ENCODE measurements at regions of chr13 and their contacts with region 1.

Region 1: DNA sequence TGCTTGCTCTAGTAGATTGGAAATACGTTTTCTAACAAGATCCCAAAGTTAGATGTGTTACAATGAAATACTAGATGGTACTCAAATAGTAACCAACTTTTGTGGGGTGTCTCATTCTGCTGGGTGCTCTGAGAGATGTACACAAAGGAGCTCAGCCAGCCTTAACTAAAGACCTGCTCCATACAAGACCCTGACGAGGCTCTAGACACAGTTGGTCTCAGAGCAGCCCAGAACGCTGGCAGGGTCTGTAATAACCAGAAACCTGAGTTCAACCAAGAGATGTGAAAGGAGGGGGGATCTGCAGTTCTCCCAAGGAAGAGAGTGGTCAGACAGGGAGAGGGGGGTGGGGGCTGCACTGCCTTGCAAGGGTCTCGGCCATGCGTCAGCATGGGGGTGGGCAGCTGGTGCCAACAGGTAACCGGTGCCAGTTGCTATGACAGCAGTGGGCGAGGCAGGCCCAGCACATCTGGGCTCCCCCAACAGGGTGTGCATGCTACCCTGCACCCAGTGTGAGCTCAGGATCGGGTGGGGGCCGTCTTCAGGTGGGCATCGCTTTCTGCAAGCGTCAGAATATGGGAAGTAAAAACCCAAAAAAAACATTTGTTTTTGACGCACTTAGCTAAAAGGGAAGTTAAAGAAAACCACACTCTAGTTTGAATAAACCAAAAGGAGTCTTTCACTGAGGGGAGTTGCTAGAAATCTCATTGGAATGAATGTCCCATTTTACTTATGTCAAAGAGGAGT is 68.0 kb upstream of the GPR183 start:
- DNase-seq: peak; percentile 78
- ATAC-seq: peak; percentile 80
- H3K4me3 Mint-ChIP-seq: peak overlapping the region; percentile 72
- H3K27ac Mint-ChIP-seq: peak overlapping the region; percentile 98
- H3K4me1 Mint-ChIP-seq: peaks cover 92% of the 10 kb centered on the region
- H3K27me3 Mint-ChIP-seq: no peaks in the 10 kb centered on the region
- CTCF ChIP-seq: no peak

Region 2: DNA sequence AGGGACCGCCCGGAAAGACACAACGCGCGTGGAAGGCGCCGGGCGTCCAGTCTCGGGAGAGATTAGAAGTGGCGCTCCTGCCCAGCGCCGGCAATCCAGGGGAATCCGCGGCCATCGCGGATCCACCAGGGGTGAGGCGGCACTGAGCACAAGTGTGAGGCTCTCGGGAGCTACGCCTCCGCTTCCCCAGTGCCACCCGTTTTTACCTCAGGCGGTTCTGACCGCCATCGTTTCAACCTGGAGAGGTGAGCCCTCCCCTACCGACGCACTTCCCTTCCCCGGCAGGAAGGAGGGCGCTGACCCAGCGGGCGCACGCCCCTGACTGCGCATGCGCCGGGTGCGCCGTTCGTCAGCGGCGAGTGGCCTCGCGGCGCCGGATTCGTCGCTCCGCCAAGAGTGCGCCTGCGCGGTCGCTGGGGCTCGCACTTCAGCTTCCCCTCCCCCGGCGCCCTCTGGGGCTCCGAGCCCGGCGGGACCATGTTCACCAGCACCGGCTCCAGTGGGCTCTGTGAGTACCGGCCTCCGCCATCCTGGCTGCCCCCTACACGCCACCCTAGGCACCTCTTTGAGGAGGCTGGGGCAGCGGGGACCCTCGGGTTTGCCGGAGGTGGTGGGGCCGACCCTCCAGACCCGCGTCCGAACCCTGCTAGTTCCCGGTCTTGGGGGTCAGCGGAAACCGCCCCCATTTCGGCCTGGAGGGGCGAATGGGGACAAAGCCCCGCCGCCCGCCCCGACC is 174.6 kb before region 1 on chr13 and contains the start of gene UBAC2:
- CTCF ChIA-PET with region 1: interaction called, 3 read pairs
- POLR2A ChIA-PET with region 1: interaction called, 6 read pairs
- intact Hi-C with region 1: loop called (anchors 1 kb)
- DNase-seq: peak; percentile 98
- ATAC-seq: peak; percentile 74
- H3K4me3 Mint-ChIP-seq: peak within 1 kb of the TSS; percentile 95
- H3K27ac Mint-ChIP-seq: peak within 1 kb of the TSS; percentile 94
- H3K4me1 Mint-ChIP-seq: peaks cover 59% of the 10 kb centered on the region
- H3K27me3 Mint-ChIP-seq: no peaks in the 10 kb centered on the region
- CTCF ChIP-seq: no peak
- total RNA-seq, gene UBAC2: 40.6 and 51.0 TPM in 2 replicates

Region 3: DNA sequence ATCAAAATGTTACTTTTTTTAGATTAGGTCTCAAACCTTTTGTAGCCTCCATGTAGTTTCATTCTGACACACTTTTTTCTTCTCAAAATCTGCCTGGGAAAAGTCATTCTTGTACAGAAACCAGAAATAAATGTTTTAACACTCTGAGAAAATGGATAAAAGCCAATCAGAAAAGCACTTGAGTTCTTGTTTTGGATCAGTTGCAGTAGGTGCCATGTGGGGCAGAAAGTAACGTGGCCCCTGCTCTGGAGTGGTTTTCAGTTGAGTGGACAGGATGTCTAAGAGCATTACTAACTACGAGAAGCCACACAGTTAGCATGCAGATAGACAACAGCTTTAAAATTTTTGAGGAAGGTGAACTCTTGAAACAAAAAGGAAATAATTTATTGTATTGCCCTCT is 87.1 kb before region 1 on chr13:
- CTCF ChIA-PET with region 1: interaction called, 9 read pairs
- POLR2A ChIA-PET with region 1: interaction called, 45 read pairs
- intact Hi-C with region 1: no loop called
- DNase-seq: no peak
- ATAC-seq: peak; percentile 85
- H3K4me3 Mint-ChIP-seq: peak overlapping the region; percentile 60
- H3K27ac Mint-ChIP-seq: peak overlapping the region; percentile 86
- H3K4me1 Mint-ChIP-seq: peaks cover 89% of the 10 kb centered on the region
- H3K27me3 Mint-ChIP-seq: no peaks in the 10 kb centered on the region
- CTCF ChIP-seq: no peak

Region 4: GRCh38 chr13:99307648-99308339 is 67.4 kb before region 1 on chr13:
- CTCF ChIA-PET with region 1: interaction called, 4 read pairs
- POLR2A ChIA-PET with region 1: interaction called, 75 read pairs
- intact Hi-C with region 1: loop called (anchors 1 kb)
- DNase-seq: no peak
- ATAC-seq: peak; percentile 57
- H3K4me3 Mint-ChIP-seq: peak overlapping the region; percentile 95
- H3K27ac Mint-ChIP-seq: peak overlapping the region; percentile 92
- H3K4me1 Mint-ChIP-seq: peaks cover 82% of the 10 kb centered on the region
- H3K27me3 Mint-ChIP-seq: no peaks in the 10 kb centered on the region
- CTCF ChIP-seq: no peak

Region 5: DNA sequence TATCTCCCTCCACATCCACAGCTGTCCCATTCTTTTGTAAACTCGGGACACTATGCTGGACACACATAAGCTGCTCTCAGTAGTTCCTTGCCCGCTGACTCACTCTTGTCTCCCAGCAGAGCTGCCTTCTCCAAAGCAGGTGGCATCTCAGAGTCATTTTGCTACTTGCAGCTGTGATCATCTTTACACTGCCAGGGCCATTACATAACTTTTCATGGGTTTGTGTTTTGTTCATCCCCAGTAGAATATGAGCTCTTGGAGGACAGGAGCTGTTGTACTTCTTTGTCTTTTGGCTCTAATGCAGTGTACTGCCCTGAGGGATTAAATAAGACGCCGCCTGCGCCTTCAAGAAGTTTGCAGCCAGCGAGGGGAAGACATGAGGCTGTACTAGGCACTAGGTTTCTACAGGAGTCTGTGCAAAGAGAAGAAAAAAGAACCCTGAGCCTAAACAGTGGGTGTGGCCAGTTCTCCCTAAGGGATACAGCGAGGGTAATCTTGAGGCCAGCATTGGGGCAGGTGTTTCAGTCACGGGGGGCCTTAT is 27.2 kb before region 1 on chr13:
- CTCF ChIA-PET with region 1: interaction called, 7 read pairs
- POLR2A ChIA-PET with region 1: interaction called, 49 read pairs
- intact Hi-C with region 1: no loop called
- DNase-seq: no peak
- ATAC-seq: peak; percentile 68
- H3K4me3 Mint-ChIP-seq: peak overlapping the region; percentile 50
- H3K27ac Mint-ChIP-seq: peak overlapping the region; percentile 82
- H3K4me1 Mint-ChIP-seq: peaks cover 63% of the 10 kb centered on the region
- H3K27me3 Mint-ChIP-seq: no peaks in the 10 kb centered on the region
- CTCF ChIP-seq: no peak

Region 6: GRCh38 chr13:99419591-99420243 is 44.6 kb after region 1 on chr13:
- CTCF ChIA-PET with region 1: interaction called, 5 read pairs
- POLR2A ChIA-PET with region 1: interaction called, 22 read pairs
- intact Hi-C with region 1: loop called (anchors 1 kb)
- DNase-seq: no peak
- ATAC-seq: no peak
- H3K4me3 Mint-ChIP-seq: peak overlapping the region; percentile 80
- H3K27ac Mint-ChIP-seq: peak overlapping the region; percentile 96
- H3K4me1 Mint-ChIP-seq: peaks cover 72% of the 10 kb centered on the region
- H3K27me3 Mint-ChIP-seq: no peaks in the 10 kb centered on the region
- CTCF ChIP-seq: no peak

Region 7: DNA sequence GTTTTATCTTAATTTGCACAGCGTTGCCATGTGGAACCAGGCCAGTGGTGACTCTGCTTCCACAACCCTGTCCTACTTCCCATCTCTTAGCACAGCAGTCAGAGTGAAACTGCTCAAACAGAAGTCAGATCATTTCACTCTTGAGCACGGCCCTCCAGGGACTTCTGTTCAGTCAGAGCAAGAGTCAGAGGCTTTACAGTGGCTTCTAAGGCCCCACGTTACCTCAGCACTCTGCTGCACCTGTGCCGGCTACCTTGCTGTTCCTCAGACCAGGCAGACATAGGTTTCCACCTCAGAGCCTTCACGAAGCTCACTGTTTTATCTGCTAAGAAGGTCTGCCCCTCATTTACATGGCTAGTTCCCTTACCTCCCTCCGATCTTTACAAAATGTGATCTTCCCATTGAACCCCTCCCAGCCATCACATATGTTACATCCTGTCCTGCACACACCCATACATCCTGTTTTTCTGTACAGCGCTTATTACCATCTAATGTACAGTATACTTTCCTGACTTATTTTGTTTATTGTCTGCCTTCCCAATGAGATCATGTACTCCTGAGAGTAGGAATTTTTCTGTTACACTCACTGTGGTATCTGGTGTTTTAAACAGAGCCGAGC is 167.7 kb after region 1 on chr13:
- CTCF ChIA-PET with region 1: no interaction called
- POLR2A ChIA-PET with region 1: interaction called, 4 read pairs
- intact Hi-C with region 1: loop called (anchors 1 kb)
- DNase-seq: peak; percentile 61
- ATAC-seq: peak; percentile 94
- H3K4me3 Mint-ChIP-seq: peak overlapping the region; percentile 53
- H3K27ac Mint-ChIP-seq: peak overlapping the region; percentile 84
- H3K4me1 Mint-ChIP-seq: peaks cover 67% of the 10 kb centered on the region
- H3K27me3 Mint-ChIP-seq: no peaks in the 10 kb centered on the region
- CTCF ChIP-seq: no peak

Region 8: DNA sequence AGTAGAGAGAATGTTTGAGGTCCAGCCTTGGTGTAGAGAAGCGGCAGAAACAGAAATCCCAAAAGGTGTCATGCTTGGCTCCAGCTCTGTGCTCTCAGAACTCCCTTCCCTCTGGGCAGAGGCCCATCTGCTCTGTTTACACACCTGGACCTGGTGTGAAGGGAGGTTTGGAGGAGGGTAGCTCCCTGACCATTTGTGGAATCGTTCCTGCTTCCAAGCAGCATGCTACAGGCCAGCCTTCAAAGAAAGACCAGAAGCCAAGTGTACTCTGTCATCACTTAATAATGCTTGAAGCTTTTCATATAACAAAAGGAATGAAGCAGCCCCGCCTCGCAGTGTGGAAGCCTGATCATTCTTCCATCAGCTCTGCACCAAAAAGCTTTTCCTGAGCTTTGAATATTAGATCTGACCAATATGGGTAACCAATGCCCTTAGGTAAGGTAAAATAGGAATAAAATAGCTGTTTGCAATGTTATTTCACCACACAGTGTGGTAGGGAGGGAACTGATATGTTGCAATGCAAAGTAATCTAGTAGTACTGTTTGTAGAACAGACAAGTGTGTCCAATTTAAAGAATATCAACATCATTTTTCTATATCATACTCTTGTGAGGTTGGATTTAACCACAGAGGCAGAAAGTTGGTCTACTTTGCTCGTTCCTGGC is 533.1 kb after region 1 on chr13:
- CTCF ChIA-PET with region 1: no interaction called
- POLR2A ChIA-PET with region 1: no interaction called
- intact Hi-C with region 1: no loop called
- DNase-seq: no peak
- ATAC-seq: no peak
- H3K4me3 Mint-ChIP-seq: no peak overlapping the region
- H3K27ac Mint-ChIP-seq: no peak overlapping the region
- H3K4me1 Mint-ChIP-seq: no peaks in the 10 kb centered on the region
- H3K27me3 Mint-ChIP-seq: peaks cover 44% of the 10 kb centered on the region
- CTCF ChIP-seq: no peak

Measured in activated B cell treated with CpG ODN at 0.5 μM for 24 hours (primary cell).